HCT116 (cell line): ENCODE measurements at regions of chr10 and their contacts with region 1.

Region 1: DNA sequence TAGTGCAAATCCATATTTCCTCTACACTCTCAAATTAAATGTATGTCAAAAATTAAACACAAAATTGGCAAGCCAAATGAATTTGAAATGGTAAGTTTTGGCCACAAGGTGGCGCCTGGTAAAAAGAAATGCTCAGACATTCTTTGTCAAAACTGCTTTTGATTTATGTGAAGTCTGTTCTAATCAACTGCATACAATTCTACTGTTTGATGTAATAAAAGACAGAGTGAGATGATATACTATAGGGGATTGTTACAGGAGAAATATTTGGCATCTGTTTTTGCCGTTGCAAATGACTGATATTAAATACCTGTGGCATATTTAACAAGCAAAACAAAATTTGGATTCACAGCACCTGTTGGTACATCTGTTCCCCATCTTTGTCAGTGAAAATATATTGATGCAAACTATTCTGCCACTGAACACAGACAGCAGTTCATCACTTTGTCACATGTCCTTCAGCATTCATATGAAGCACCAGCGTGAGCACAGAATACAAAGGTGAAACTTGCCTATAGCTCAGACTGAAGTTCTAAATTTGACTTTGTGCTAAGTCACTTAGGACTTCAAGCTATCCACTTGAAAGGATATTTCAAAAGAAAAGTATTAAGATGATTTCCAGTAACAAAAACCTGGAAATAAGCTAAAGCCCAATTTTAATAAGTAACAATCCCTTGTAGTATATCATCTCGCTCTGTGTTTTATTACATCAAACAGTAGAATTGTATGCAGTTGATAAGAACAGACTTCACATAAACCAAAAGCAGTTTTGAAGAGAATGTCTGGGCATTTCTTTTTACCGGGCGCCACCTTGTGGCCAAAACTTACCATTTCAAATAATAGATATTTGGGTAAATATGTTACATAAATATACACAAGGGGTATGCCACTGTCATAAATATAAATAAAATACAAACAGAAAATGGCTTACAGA is 10.2 kb upstream of the CH25H start:
- DNase-seq: peak; percentile 38
- ATAC-seq: peak; percentile 52
- H3K4me3 ChIP-seq: no peak overlapping the region
- H3K27ac ChIP-seq: 0 out of 2 replicates have a peak overlapping the region, but pooled peaks have one; percentile 19
- H3K4me1 ChIP-seq: peaks cover 4 to 5% of the 10 kb centered on the region in 2 experiments; a peak in 2 of 4 replicates
- H3K27me3 ChIP-seq: no peaks in the 10 kb centered on the region
- CTCF ChIP-seq: peak; percentile 50 to 79 (median 74)
- POLR2A ChIP-seq: no peak
- RAD21 ChIP-seq: peak; percentile 74

Region 2: DNA sequence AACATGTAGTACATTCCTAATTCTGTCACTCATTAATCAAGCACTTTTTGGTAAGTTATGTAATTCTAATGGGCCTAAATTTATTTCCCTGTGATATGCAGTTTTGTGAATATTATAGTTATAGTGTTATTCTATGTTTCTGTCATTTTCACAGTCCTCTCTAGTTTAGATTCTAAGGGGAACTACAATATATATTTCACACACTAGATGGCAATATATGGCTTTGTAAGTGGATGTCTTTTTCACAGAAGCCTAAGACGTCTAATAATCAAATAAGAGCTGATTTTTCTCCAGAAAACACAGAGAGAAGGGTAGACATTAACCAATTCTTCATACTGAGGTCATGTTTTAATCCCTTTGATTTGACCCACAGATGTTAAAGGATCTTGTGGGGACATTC is 652.3 kb before region 1 on chr10:
- CTCF ChIA-PET with region 1: interaction called, 4 read pairs
- POLR2A ChIA-PET with region 1: no interaction called
- RAD21 ChIA-PET with region 1: no interaction called
- intact Hi-C with region 1: loop called (anchors 2 kb)
- DNase-seq: peak; percentile 12
- ATAC-seq: peak; percentile 80
- H3K4me3 ChIP-seq: no peak overlapping the region
- H3K27ac ChIP-seq: no peak overlapping the region
- H3K4me1 ChIP-seq: no peaks in the 10 kb centered on the region
- H3K27me3 ChIP-seq: no peaks in the 10 kb centered on the region
- CTCF ChIP-seq: peak; percentile 29 to 67 (median 64)
- POLR2A ChIP-seq: no peak
- RAD21 ChIP-seq: peak; percentile 82

Region 3: GRCh38 chr10:88932539-88933256 is 284.6 kb before region 1 on chr10:
- CTCF ChIA-PET with region 1: interaction called, 15 read pairs
- POLR2A ChIA-PET with region 1: no interaction called
- RAD21 ChIA-PET with region 1: no interaction called
- intact Hi-C with region 1: loop called (anchors 1 kb)
- DNase-seq: peak; percentile 46
- ATAC-seq: peak; percentile 85
- H3K4me3 ChIP-seq: no peak overlapping the region
- H3K27ac ChIP-seq: no peak overlapping the region
- H3K4me1 ChIP-seq: peaks cover 7 to 16% of the 10 kb centered on the region in 2 experiments; a peak in 3 of 4 replicates
- H3K27me3 ChIP-seq: no peaks in the 10 kb centered on the region
- CTCF ChIP-seq: peak; percentile 78 to 94 (median 93)
- POLR2A ChIP-seq: no peak
- RAD21 ChIP-seq: peak; percentile 96

Region 4: GRCh38 chr10:89122433-89123051 is 94.8 kb before region 1 on chr10:
- CTCF ChIA-PET with region 1: no interaction called
- POLR2A ChIA-PET with region 1: no interaction called
- RAD21 ChIA-PET with region 1: no interaction called
- intact Hi-C with region 1: no loop called
- DNase-seq: no peak
- ATAC-seq: no peak
- H3K4me3 ChIP-seq: no peak overlapping the region
- H3K27ac ChIP-seq: no peak overlapping the region
- H3K4me1 ChIP-seq: peaks cover 0 to 18% of the 10 kb centered on the region in 2 experiments; a peak in 2 of 4 replicates
- H3K27me3 ChIP-seq: no peaks in the 10 kb centered on the region
- CTCF ChIP-seq: no peak
- POLR2A ChIP-seq: no peak
- RAD21 ChIP-seq: no peak

Region 5: DNA sequence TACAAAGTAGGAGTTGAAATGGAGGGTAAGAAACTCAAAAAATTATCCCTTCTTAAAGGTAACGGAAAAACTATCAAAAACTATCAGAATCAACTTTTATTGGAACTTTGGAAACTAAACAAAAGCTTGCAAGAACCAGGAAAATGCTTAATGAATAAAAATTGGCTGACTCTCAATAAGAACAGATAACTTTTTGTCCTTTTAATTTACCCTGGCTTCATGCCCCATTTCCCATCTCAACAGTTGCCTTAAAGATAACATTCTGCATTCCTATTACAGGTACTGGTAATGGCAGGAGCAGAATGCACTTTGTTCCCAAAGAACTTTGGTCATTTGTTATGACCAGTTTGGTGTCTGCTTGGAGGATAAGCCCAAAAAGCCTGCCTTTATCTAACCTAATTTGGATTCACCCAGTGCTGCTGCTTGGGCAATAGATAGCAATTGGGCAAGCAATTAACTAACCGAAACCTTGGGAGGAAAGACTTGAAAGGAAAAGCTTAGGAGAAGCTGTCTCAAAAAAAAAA is 28.1 kb before region 1 on chr10:
- CTCF ChIA-PET with region 1: no interaction called
- POLR2A ChIA-PET with region 1: no interaction called
- RAD21 ChIA-PET with region 1: no interaction called
- intact Hi-C with region 1: no loop called
- DNase-seq: no peak
- ATAC-seq: no peak
- H3K4me3 ChIP-seq: no peak overlapping the region
- H3K27ac ChIP-seq: no peak overlapping the region
- H3K4me1 ChIP-seq: no peaks in the 10 kb centered on the region
- H3K27me3 ChIP-seq: no peaks in the 10 kb centered on the region
- CTCF ChIP-seq: no peak
- POLR2A ChIP-seq: no peak
- RAD21 ChIP-seq: no peak

Region 6: GRCh38 chr10:89369156-89370105 is 152.1 kb after region 1 on chr10:
- CTCF ChIA-PET with region 1: interaction called, 10 read pairs
- POLR2A ChIA-PET with region 1: no interaction called
- RAD21 ChIA-PET with region 1: no interaction called
- intact Hi-C with region 1: no loop called
- DNase-seq: no peak
- ATAC-seq: peak; percentile 59
- H3K4me3 ChIP-seq: no peak overlapping the region
- H3K27ac ChIP-seq: no peak overlapping the region
- H3K4me1 ChIP-seq: no peaks in the 10 kb centered on the region
- H3K27me3 ChIP-seq: no peaks in the 10 kb centered on the region
- CTCF ChIP-seq: peak; percentile 51 to 82 (median 69); a peak in 5 of 6 replicates
- POLR2A ChIP-seq: no peak
- RAD21 ChIP-seq: peak; percentile 85

Region 7: GRCh38 chr10:89426230-89426868 is 209.0 kb after region 1 on chr10:
- CTCF ChIA-PET with region 1: no interaction called
- POLR2A ChIA-PET with region 1: no interaction called
- RAD21 ChIA-PET with region 1: no interaction called
- intact Hi-C with region 1: no loop called
- DNase-seq: no peak
- ATAC-seq: peak; percentile 87
- H3K4me3 ChIP-seq: no peak overlapping the region
- H3K27ac ChIP-seq: no peak overlapping the region
- H3K4me1 ChIP-seq: peaks cover 0 to 14% of the 10 kb centered on the region in 2 experiments; a peak in 2 of 4 replicates
- H3K27me3 ChIP-seq: no peaks in the 10 kb centered on the region
- CTCF ChIP-seq: peak; percentile 69 to 83 (median 80)
- POLR2A ChIP-seq: no peak
- RAD21 ChIP-seq: peak; percentile 91

Region 8: DNA sequence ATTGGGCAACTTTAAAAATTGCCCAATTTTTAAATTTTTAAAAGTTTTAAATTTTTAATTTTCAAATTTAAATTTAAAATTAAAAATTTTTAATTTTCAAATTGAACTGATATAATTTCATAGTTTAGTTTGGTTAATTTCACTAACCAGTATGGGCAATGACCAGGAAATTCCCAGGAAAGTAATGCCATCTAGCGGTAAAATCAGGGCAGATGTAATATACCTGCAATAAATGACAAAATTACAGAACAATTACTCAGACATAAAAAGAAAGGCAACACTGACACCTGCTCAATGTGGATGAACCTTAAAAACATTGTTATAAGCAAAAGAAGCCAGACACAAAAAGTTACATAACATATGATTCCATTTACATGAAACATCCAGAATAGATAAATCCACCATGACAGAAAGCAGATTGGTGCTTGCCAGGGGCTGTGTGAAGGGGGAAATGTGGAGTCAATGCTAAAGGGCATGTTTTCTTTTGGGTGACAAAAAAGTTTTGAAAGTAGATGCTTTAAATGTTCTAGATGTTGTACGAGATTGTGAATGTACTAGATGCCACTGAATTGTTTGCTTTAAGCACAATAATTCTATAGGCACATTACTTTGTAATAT is 346.6 kb after region 1 on chr10:
- CTCF ChIA-PET with region 1: interaction called, 3 read pairs
- POLR2A ChIA-PET with region 1: no interaction called
- RAD21 ChIA-PET with region 1: no interaction called
- intact Hi-C with region 1: loop called (anchors 1 kb)
- DNase-seq: peak; percentile 47
- ATAC-seq: peak; percentile 80
- H3K4me3 ChIP-seq: no peak overlapping the region
- H3K27ac ChIP-seq: no peak overlapping the region
- H3K4me1 ChIP-seq: no peaks in the 10 kb centered on the region
- H3K27me3 ChIP-seq: no peaks in the 10 kb centered on the region
- CTCF ChIP-seq: peak; percentile 68 to 92 (median 70)
- POLR2A ChIP-seq: no peak
- RAD21 ChIP-seq: peak; percentile 91